PC-9 (cell line): ENCODE measurements at regions of chr6 and their contacts with region 1.

Region 1: DNA sequence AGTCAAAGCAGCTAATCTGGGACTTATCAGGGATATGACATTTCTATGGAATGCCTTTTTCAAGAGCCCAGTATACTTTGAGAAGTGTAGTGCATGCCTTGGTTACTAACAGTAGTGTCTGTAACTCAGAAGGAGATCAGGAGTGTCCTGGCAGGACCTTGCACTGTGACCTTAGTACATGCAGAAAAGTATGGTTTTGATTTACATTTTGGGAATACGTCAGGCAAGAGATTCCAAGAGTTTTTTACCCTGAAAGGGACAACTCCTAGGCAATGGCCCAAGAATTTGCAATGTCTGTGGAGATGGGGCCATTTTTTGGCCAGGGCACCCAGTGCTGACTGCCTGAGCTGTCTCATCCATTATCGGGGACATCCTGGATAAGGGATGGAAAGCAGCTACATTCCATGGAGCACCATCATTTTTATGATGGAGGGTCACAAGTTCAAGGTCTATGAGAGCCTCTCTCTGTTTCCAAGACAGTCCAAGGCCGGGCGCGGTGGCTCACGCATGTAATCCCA is 80.2 kb downstream of the FAM50B start:
- DNase-seq: no peak
- H3K4me3 ChIP-seq: no peak overlapping the region
- H3K27ac ChIP-seq: no peak overlapping the region
- H3K4me1 ChIP-seq: no peaks in the 10 kb centered on the region
- H3K27me3 ChIP-seq: no peaks in the 10 kb centered on the region
- CTCF ChIP-seq: no peak

Region 2: DNA sequence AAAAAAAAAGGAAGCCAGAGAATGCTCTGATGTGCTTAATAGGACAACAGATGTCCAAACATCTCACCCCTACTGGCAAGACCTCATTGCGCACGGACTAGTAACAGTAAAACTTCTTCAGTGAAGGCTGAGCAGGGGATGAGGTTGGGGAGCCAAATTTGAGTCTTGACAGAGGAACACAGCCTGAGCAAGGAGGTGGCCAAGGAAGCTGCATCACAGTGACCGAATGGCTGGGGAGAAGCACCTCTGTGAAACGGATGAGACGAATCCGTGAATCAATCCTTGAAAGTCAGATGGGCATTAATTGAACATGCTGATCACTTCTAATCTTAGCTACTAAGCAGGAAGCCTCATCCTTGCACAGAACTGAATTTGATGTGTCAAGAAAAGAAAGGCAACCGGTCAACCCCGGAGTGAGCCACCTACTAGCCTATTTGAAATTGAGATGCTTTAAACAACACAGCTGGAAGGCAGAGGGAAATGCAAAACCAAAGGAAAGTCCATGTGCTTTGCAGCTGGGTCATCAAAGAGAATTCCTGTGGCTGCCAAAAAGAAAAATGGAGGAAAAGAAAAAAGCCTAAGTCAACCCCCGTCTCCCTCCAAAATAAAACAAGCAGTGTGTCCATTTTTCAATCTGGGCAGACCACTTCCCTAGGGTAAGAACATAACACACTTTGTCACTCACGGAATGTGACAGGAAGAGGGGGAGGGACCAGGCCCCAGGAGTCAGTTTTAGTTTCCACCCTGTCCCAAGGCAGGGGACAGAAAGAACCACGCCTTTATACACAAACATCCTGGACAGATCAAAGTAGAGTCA is 207.3 kb before region 1 on chr6:
- CTCF ChIA-PET with region 1: no interaction called
- POLR2A ChIA-PET with region 1: no interaction called
- intact Hi-C with region 1: no loop called
- DNase-seq: no peak
- H3K4me3 ChIP-seq: no peak overlapping the region
- H3K27ac ChIP-seq: no peak overlapping the region
- H3K4me1 ChIP-seq: no peaks in the 10 kb centered on the region
- H3K27me3 ChIP-seq: no peaks in the 10 kb centered on the region
- CTCF ChIP-seq: no peak

Region 3: GRCh38 chr6:3887150-3887700 is 42.1 kb before region 1 on chr6:
- CTCF ChIA-PET with region 1: interaction called, 4 read pairs
- POLR2A ChIA-PET with region 1: no interaction called
- intact Hi-C with region 1: loop called (anchors 5 kb)
- DNase-seq: peak; percentile 28 to 69
- H3K4me3 ChIP-seq: no peak overlapping the region
- H3K27ac ChIP-seq: no peak overlapping the region
- H3K4me1 ChIP-seq: peaks cover 40% of the 10 kb centered on the region
- H3K27me3 ChIP-seq: no peaks in the 10 kb centered on the region
- CTCF ChIP-seq: 0 out of 2 replicates have a peak, but pooled peaks have one; percentile 37

Region 4: DNA sequence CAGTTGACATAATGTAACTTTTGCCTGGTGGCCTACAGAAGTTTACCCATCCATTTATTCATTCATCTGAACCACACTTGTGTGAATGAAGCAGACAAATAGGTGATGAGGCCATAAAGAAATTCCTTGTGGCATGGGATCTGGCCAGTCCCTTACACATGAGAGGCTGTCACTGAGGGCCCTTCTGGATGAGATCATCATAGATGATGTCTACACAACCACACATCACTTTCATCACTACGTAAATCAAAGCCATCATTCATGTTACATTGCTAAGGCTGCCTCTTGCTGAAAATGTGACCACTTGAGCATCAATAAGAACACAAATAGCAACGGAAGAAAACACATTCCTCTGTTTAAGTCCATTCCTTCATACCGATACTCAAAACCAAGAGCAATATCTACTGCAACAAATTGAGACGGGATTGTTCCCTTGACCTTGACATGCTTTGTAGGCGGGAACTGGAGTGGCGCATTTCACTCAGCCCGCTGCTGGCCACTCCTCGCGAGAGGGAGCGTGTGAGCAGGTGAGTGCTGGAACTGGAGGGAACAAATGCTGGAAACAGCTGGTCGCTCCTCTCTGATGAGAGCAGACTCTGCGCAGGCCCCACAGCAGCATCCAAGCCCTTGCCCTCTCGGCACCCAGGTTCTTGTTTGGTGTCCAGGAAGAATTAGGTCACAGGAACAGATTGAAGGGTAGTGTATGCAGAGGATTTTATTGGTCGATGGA is 30.9 kb before region 1 on chr6:
- CTCF ChIA-PET with region 1: no interaction called
- POLR2A ChIA-PET with region 1: no interaction called
- intact Hi-C with region 1: no loop called
- DNase-seq: no peak
- H3K4me3 ChIP-seq: no peak overlapping the region
- H3K27ac ChIP-seq: no peak overlapping the region
- H3K4me1 ChIP-seq: peaks cover 10% of the 10 kb centered on the region
- H3K27me3 ChIP-seq: no peaks in the 10 kb centered on the region
- CTCF ChIP-seq: no peak

Region 5: GRCh38 chr6:3913077-3913957 is 16.0 kb before region 1 on chr6:
- CTCF ChIA-PET with region 1: interaction called, 12 read pairs
- POLR2A ChIA-PET with region 1: no interaction called
- intact Hi-C with region 1: no loop called
- DNase-seq: peak; percentile 74 to 95
- H3K4me3 ChIP-seq: peak overlapping the region; percentile 49; the same call in 1 of the 2 replicates
- H3K27ac ChIP-seq: peak overlapping the region; percentile 100
- H3K4me1 ChIP-seq: peaks cover 45% of the 10 kb centered on the region
- H3K27me3 ChIP-seq: no peaks in the 10 kb centered on the region
- CTCF ChIP-seq: no peak

Region 6: GRCh38 chr6:3962957-3963303 is 33.6 kb after region 1 on chr6:
- CTCF ChIA-PET with region 1: no interaction called
- POLR2A ChIA-PET with region 1: no interaction called
- intact Hi-C with region 1: no loop called
- DNase-seq: no peak
- H3K4me3 ChIP-seq: no peak overlapping the region
- H3K27ac ChIP-seq: no peak overlapping the region
- H3K4me1 ChIP-seq: no peaks in the 10 kb centered on the region
- H3K27me3 ChIP-seq: no peaks in the 10 kb centered on the region
- CTCF ChIP-seq: no peak

Region 7: DNA sequence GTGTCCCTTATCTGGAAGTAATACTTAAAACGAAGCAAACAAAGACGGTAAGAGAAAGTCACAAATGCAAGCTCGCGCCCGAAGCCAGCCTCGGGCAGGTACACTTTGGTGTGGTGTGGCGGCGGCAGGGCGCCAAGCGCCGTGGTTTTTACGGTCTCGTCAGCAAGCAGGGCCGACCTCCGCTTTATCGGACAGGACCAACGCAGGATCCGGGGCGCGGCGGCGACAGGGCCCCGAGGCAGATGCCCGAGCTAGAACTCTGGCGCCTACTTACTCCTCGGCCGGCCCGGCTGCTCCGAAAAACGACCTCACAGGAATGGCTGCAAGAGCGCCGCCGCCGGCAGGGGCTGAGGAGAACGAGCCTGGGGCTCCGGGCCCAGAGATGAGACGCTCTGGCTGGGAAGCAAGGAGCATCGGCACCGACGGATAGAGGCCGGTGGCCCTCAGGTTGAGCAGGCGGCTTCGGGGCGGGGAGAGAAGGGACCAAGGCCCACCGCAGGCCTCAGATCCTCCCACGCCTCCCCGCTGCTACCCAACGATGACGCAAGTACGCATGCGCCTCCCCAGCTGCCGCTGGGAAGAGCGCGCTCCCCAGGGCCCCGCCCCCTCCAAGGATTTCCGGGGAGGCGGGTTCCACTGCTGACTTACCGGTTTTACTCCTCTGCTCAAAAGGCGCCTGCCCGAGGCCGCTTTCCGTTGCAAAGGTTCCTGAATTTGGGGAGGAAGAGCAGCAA is 89.0 kb after region 1 on chr6:
- CTCF ChIA-PET with region 1: no interaction called
- POLR2A ChIA-PET with region 1: no interaction called
- intact Hi-C with region 1: no loop called
- DNase-seq: peak; percentile 87 to 94
- H3K4me3 ChIP-seq: peak overlapping the region; percentile 95
- H3K27ac ChIP-seq: peak overlapping the region; percentile 90
- H3K4me1 ChIP-seq: peaks cover 25% of the 10 kb centered on the region
- H3K27me3 ChIP-seq: no peaks in the 10 kb centered on the region
- CTCF ChIP-seq: no peak; the same call in 1 of the 2 replicates